Endothelial cell of umbilical vein (primary cell): ENCODE measurements at regions of chr3 and their contacts with region 1.

Region 1: GRCh38 chr3:9704347-9705322 is 1.0 kb downstream of the CPNE9 start:
- DNase-seq: peak; percentile 28
- H3K4me3 ChIP-seq: no peak overlapping the region
- H3K27ac ChIP-seq: no peak overlapping the region
- H3K4me1 ChIP-seq: peaks cover 7% of the 10 kb centered on the region
- H3K27me3 ChIP-seq: peaks cover 1 to 8% of the 10 kb centered on the region in 2 experiments
- CTCF ChIP-seq: no peak
- POLR2A ChIP-seq: no peak

Region 2: GRCh38 chr3:9238721-9239295 is 465.8 kb before region 1 on chr3:
- CTCF ChIA-PET with region 1: no interaction called
- POLR2A ChIA-PET with region 1: no interaction called
- dilution Hi-C with region 1: no loop called
- intact Hi-C with region 1: loop called (anchors 5 kb)
- DNase-seq: no peak
- H3K4me3 ChIP-seq: no peak overlapping the region
- H3K27ac ChIP-seq: no peak overlapping the region
- H3K4me1 ChIP-seq: no peaks in the 10 kb centered on the region
- H3K27me3 ChIP-seq: no peaks in the 10 kb centered on the region
- CTCF ChIP-seq: no peak
- POLR2A ChIP-seq: no peak

Region 3: GRCh38 chr3:9266716-9267115 is 437.9 kb before region 1 on chr3:
- CTCF ChIA-PET with region 1: no interaction called
- POLR2A ChIA-PET with region 1: no interaction called
- dilution Hi-C with region 1: no loop called
- intact Hi-C with region 1: no loop called
- DNase-seq: no peak
- H3K4me3 ChIP-seq: no peak overlapping the region
- H3K27ac ChIP-seq: no peak overlapping the region
- H3K4me1 ChIP-seq: no peaks in the 10 kb centered on the region
- H3K27me3 ChIP-seq: no peaks in the 10 kb centered on the region
- CTCF ChIP-seq: no peak
- POLR2A ChIP-seq: no peak

Region 4: GRCh38 chr3:9352917-9353752 is 351.5 kb before region 1 on chr3:
- CTCF ChIA-PET with region 1: no interaction called
- POLR2A ChIA-PET with region 1: no interaction called
- dilution Hi-C with region 1: no loop called
- intact Hi-C with region 1: loop called (anchors 10 kb)
- DNase-seq: peak; percentile 81
- H3K4me3 ChIP-seq: no peak overlapping the region
- H3K27ac ChIP-seq: no peak overlapping the region
- H3K4me1 ChIP-seq: peaks cover 11% of the 10 kb centered on the region
- H3K27me3 ChIP-seq: no peaks in the 10 kb centered on the region
- CTCF ChIP-seq: peak; percentile 86 to 92
- POLR2A ChIP-seq: no peak